Dorsolateral prefrontal cortex (tissue), 120 donors: ENCODE measurements at regions of chr11 and their contacts with region 1.

Region 1: GRCh38 chr11:131674051-131674755 is 303.8 kb downstream of the NTM start:
- DNase-seq: peak; percentile 85 to 94 (median 90)
- H3K4me3 ChIP-seq: peak overlapping the region in 23 of 59 donors; percentile 5 to 58 (median 28)
- H3K27ac ChIP-seq: peak overlapping the region; percentile 46 to 95 (median 84)
- H3K27me3 ChIP-seq: no peaks in the 10 kb centered on the region
- CTCF ChIP-seq: peak; percentile 93 to 100 (median 98)

Region 2: DNA sequence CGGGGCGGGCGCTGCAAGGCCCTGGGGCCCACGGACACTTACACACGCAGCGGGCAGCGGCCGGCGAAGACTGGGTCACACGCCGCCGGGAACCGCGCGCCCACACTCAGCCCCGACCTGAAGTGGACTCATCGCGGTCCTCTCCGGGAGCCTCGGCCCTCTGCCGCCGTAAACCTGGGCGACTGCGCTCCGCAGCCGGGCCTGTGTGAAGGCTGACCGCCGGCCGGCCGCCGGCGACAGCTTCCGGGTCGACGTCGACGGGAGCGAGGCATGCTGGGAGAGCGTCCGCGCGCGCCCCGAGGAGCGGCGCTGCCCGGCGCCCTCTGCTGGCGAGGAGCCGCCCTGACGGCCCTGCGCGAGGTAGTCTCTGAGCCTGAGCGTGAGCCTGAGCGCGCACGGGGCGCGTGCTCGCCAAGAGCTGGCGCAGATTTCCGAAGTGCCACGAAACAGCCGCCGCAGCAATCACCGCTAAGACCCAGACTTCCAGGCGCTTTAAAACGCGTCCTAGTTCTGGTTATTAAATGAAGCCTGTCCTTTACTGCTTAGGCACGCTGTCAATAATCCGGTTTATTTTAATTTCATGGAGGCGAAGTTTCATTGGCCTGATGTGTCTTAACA is 757.9 kb before region 1 on chr11 and contains the start of gene SNX19:
- intact Hi-C with region 1: loop called (anchors 5 to 10 kb)
- DNase-seq: peak; percentile 85 to 95 (median 91)
- H3K4me3 ChIP-seq: peak within 1 kb of the TSS; percentile 68 to 100 (median 93)
- H3K27ac ChIP-seq: peak within 1 kb of the TSS; percentile 20 to 95 (median 82)
- H3K27me3 ChIP-seq: no peaks in the 10 kb centered on the region
- CTCF ChIP-seq: peak; percentile 84 to 100 (median 98)
- total RNA-seq, gene SNX19: 61.4 to 132 (median 93.3) TPM

Region 3: DNA sequence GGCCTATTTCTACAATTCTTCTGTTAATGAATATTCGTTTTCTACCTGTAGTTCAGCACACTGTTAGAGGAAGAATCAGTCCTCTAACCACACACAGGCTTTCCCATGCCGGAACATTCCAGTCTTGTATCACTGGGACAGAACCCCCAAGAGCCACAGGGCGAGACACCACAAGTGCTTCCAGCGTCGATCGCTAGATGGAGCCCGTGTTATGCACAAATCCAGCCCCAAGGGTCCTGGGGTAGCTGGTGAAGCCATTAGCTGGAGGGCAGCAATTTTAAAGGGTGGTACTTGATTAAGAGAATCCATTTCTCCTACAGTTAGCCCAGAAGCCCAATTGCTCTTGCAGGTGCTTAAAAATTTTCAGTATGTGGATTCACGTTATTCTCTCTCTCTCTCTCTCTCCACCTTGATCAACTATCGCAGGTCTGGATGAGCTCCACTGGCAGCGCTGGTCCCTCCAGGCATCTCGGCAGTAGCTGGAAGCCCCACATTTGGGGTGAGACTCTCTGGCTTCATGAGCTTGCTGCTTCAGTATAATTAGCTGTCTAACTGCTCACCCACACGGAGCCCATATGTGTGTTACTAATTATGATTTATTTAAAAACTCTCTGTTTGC is 609.7 kb before region 1 on chr11:
- intact Hi-C with region 1: loop called (anchors 2 to 5 kb)
- DNase-seq: peak; percentile 53 to 77 (median 67)
- H3K4me3 ChIP-seq: peak overlapping the region in 13 of 59 donors; percentile 8 to 34 (median 20)
- H3K27ac ChIP-seq: peak overlapping the region in 1 of 59 donors; percentile 36
- H3K27me3 ChIP-seq: peaks cover 0 to 7% (median 0%) of the 10 kb centered on the region in 45 donors
- CTCF ChIP-seq: peak in 55 of 56 donors; percentile 48 to 95 (median 87)

Region 4: GRCh38 chr11:131275580-131275979 is 398.6 kb before region 1 on chr11:
- intact Hi-C with region 1: loop called in 1 of 2 experiments (anchors 10 kb)
- DNase-seq: no peak
- H3K4me3 ChIP-seq: no peak overlapping the region
- H3K27ac ChIP-seq: peak overlapping the region in 28 of 59 donors; percentile 1 to 96 (median 35)
- H3K27me3 ChIP-seq: no peaks in the 10 kb centered on the region
- CTCF ChIP-seq: no peak

Region 5: DNA sequence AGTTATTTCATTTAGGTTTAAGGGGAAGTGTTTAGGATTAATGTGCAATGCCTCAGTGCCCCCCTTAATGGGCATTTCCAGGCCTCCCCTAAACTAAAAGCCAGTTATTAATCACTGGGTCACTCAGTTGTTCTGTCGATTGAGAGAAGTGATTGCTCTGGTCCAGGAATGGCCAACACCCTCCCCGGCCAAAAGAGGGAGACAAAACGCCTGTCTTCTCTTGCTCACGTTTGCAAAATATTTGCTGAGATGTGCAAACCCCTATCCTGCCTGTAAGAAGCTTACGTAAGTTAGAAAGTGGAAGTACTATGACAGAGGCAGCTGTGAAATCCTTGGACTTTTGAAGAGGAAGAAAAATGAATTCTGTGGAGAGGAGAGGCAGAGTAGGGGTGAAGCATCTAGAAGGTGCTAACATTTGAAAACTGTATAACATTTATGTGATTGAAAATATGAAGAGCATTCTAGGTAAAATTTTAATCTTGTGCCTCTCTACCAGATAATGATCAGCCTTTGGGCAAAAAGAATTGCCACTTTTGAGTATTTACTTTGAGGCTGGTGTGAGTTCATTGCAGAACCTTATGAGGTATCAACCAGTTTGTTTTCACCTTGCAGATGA is 266.1 kb before region 1 on chr11:
- intact Hi-C with region 1: loop called in 1 of 2 experiments (anchors 10 kb)
- DNase-seq: peak in 3 of 10 donors; percentile 46 to 57 (median 52)
- H3K4me3 ChIP-seq: no peak overlapping the region
- H3K27ac ChIP-seq: peak overlapping the region in 1 of 59 donors; percentile 12
- H3K27me3 ChIP-seq: no peaks in the 10 kb centered on the region
- CTCF ChIP-seq: peak in 53 of 56 donors; percentile 19 to 76 (median 51)

Region 6: GRCh38 chr11:131534611-131535010 is 139.6 kb before region 1 on chr11:
- intact Hi-C with region 1: loop called (anchors 5 kb)
- DNase-seq: peak in 8 of 10 donors; percentile 50 to 75 (median 68)
- H3K4me3 ChIP-seq: peak overlapping the region in 1 of 59 donors; percentile 25
- H3K27ac ChIP-seq: peak overlapping the region; percentile 72 to 97 (median 92)
- H3K27me3 ChIP-seq: no peaks in the 10 kb centered on the region
- CTCF ChIP-seq: no peak